ENCODE measurements at regions of chr17 and their contacts with region 1.

Region 1: DNA sequence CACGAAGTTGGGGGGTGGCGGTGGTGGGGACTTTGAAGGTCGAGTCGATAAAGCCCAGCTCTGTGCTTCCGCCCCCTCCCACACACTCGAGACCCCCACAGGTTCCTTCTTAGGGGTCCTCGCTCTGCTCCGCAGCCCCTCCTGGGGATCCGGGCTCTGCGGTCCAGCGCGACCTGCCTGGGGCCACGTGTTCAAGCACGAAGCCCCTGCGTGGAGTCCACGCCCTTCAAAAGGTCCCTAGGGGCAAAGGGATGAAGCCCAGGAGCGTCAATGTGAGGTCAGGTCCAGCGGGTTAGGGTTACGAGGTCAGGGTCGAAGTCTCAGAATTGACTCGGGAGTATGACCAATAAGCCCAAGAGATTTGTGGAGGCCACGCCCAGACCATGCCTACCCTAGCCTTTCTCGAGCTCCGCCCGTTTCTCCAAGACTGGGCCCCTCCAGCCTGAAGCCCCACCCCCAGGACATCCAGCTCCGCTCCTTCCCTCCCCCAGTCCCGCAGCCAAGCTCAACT is 786 bp upstream of the CACNA1G start:
- DNase-seq: peak; percentile 76
- ATAC-seq: peak; percentile 41 to 69

Region 2: GRCh38 chr17:50596191-50597037 is 36.7 kb after region 1 on chr17:
- intact Hi-C with region 1: loop called in 1 of 2 experiments (anchors 5 kb)
- DNase-seq: peak; percentile 60
- ATAC-seq: peak; percentile 56 to 57